A673 (cell line): ENCODE measurements at regions of chr11 and their contacts with region 1.

Region 1: DNA sequence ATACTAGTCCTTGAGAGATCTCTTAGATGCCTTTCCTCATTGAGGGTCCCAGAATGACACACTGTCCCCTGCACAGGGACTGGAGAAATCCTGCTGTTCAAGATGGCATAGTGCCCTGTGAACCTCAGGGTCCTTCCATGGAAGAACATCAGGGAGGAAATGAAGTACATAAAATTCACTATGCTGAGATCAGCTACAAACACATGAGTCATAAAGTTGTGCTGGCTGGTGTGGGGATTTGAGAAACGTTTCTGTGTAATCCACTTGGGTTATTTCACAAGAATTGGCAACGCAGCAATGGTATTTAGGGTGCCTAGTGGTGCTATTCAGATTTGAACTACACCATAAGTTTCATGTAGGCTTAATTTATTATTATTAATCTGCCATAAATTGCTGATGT is 174.4 kb downstream of the MAML2 start:
- DNase-seq: peak; percentile 94
- H3K4me3 ChIP-seq: no peak overlapping the region
- H3K27ac ChIP-seq: peak overlapping the region; percentile 71
- H3K4me1 ChIP-seq: peaks cover 66% of the 10 kb centered on the region
- H3K27me3 ChIP-seq: no peaks in the 10 kb centered on the region
- CTCF ChIP-seq: no peak

Region 2: GRCh38 chr11:95790123-95790932 is 378.3 kb before region 1 on chr11 and contains the start of gene CEP57:
- CTCF ChIA-PET with region 1: no interaction called
- POLR2A ChIA-PET with region 1: no interaction called
- intact Hi-C with region 1: loop called (anchors 10 kb)
- DNase-seq: peak; percentile 99
- H3K4me3 ChIP-seq: peak within 1 kb of the TSS; percentile 91
- H3K27ac ChIP-seq: peak within 1 kb of the TSS; percentile 97
- H3K4me1 ChIP-seq: peaks cover 47% of the 10 kb centered on the region
- H3K27me3 ChIP-seq: no peaks in the 10 kb centered on the region
- CTCF ChIP-seq: no peak
- total RNA-seq, gene CEP57: 72.3 and 79.8 TPM in 2 replicates

Region 3: DNA sequence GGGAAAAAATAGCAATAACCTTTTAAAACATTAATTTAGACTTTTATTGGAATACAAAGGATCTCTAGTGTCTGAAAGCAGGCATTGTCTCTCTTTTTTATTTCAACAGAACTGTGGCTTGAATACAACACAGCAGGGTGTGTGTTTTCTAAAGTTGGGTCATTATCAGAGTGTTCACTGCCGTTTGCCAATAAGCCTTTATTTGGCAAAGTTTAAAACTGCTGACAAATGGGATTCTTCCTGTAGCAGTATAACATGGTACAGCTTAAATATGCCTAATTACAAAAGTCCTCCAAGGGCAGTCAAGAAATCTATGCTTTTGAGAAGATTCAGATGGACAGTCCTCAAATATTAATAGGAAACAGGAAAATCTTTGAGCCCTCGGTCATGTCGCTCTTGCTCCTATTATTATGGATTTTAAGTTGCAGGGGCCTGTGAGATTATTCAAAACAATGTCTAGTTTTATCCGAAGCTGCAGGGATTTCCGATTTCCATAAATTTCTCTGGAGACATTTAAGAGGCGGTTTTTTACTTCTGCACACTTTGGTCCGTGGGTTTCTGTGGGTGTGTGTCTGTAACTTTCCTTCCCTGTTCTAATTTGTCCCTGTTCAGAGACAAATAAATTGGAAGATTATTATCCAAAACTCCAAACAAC is 25.5 kb before region 1 on chr11:
- CTCF ChIA-PET with region 1: no interaction called
- POLR2A ChIA-PET with region 1: interaction called, 11 read pairs
- intact Hi-C with region 1: no loop called
- DNase-seq: peak; percentile 92
- H3K4me3 ChIP-seq: peak overlapping the region; percentile 20
- H3K27ac ChIP-seq: peak overlapping the region; percentile 53
- H3K4me1 ChIP-seq: peaks cover 64% of the 10 kb centered on the region
- H3K27me3 ChIP-seq: no peaks in the 10 kb centered on the region
- CTCF ChIP-seq: no peak

Region 4: GRCh38 chr11:96185220-96185768 is 16.7 kb after region 1 on chr11:
- CTCF ChIA-PET with region 1: no interaction called
- POLR2A ChIA-PET with region 1: no interaction called
- intact Hi-C with region 1: no loop called
- DNase-seq: no peak
- H3K4me3 ChIP-seq: no peak overlapping the region
- H3K27ac ChIP-seq: no peak overlapping the region
- H3K4me1 ChIP-seq: peaks cover 26% of the 10 kb centered on the region
- H3K27me3 ChIP-seq: no peaks in the 10 kb centered on the region
- CTCF ChIP-seq: no peak

Region 5: DNA sequence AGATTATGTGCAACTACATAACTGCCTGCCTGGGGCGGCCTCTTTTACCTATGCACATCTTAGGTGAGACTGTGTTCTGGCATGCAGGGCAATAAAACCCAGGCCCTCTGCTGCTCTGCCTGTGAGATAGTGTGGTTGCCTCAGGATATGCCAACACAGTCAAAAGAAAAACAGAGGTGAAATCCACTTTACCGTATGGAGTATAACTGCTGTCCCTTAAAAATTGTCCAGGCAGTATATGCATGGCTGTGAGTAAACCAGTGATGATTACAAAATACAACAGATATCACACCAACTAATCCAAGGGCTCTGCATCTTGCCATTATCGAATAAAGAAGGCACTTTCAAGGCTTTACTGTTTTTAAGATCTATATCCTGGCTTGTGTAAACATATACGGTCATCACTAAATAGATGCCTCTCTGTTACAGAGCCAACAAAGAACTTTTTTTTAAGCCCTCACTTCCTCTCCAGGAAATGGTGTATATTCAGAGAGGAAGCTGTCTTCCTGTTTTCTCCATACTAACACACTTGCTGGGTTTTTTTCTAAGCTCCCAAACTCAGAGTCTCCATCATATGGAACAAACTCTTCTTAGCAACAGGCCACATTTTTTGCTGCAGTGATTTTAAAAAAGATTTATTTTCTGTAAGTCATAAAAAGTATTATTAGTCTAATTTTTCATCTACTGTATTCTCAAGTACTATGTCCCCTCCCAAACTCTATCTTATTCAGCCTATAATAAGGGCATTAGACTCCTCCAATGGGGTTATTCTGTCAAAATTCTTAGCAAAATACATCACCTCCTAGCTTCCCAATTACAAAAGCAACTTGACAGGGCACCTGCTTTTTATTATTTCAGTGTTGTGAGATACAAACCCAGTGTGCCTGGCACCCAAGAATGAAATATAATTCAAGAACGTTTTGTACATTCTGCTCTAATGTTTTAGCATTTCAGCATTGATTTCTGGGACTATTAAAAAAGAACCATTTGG is 39.1 kb after region 1 on chr11:
- CTCF ChIA-PET with region 1: no interaction called
- POLR2A ChIA-PET with region 1: no interaction called
- intact Hi-C with region 1: loop called (anchors 5 kb)
- DNase-seq: peak; percentile 96
- H3K4me3 ChIP-seq: peak overlapping the region; percentile 1
- H3K27ac ChIP-seq: peak overlapping the region; percentile 73
- H3K4me1 ChIP-seq: peaks cover 91% of the 10 kb centered on the region
- H3K27me3 ChIP-seq: no peaks in the 10 kb centered on the region
- CTCF ChIP-seq: peak; percentile 22; the same call in 1 of the 2 replicates

Region 6: GRCh38 chr11:96506953-96507354 is 338.3 kb after region 1 on chr11:
- CTCF ChIA-PET with region 1: no interaction called
- POLR2A ChIA-PET with region 1: no interaction called
- intact Hi-C with region 1: no loop called
- DNase-seq: no peak
- H3K4me3 ChIP-seq: no peak overlapping the region
- H3K27ac ChIP-seq: no peak overlapping the region
- H3K4me1 ChIP-seq: no peaks in the 10 kb centered on the region
- H3K27me3 ChIP-seq: peaks cover 17% of the 10 kb centered on the region
- CTCF ChIP-seq: no peak

Region 7: GRCh38 chr11:97015327-97015726 is 846.7 kb after region 1 on chr11:
- CTCF ChIA-PET with region 1: no interaction called
- POLR2A ChIA-PET with region 1: no interaction called
- intact Hi-C with region 1: no loop called
- DNase-seq: no peak
- H3K4me3 ChIP-seq: no peak overlapping the region
- H3K27ac ChIP-seq: no peak overlapping the region
- H3K4me1 ChIP-seq: no peaks in the 10 kb centered on the region
- H3K27me3 ChIP-seq: no peaks in the 10 kb centered on the region
- CTCF ChIP-seq: no peak